AG04449 (cell line): ENCODE measurements at regions of chr2 and their contacts with region 1.

Region 1: DNA sequence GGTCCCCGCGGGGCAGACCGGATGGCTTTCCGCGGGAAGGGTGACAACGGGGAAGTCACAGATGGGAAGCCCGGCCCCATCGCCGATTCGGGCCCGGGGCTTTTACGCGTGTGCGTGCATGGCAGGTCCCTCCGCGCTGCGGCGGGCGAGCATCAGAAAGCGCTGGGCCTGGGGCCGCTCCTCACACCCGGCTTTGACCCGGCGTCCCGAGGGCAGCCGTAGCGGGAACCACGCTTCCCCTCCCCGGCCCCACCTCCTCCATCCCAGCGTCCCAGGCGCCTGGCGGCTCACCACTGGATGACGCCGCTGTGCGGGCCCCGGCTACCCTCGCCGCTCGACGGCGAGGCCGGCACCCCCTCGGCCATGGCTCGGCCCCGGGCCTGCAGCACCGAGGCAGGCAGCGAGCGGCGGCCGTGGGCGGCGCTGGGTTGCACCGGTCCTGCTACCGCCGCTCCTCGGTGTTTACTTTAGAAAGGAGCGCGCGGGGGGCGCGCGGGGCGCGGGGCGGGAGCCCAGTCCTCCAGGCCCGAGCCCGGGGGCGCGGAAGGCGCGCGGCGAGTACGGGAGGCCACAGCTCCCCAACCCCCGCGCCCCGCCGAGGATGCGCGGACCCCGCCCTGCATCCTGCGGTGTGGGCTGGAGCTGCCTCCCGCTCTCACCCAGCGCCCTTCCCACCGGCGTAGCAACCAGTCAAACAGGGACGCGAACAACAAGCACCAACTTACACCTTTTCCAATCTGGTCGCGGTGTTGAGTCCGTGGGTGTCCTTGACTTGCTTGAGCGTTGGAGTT is 806 bp downstream of the RFX8 start:
- DNase-seq: no peak
- H3K4me3 ChIP-seq: peak overlapping the region; percentile 63
- CTCF ChIP-seq: no peak

Region 2: GRCh38 chr2:101410716-101411211 is 63.3 kb before region 1 on chr2:
- CTCF ChIA-PET with region 1: no interaction called
- POLR2A ChIA-PET with region 1: no interaction called
- DNase-seq: no peak
- H3K4me3 ChIP-seq: no peak overlapping the region
- CTCF ChIP-seq: no peak

Region 3: DNA sequence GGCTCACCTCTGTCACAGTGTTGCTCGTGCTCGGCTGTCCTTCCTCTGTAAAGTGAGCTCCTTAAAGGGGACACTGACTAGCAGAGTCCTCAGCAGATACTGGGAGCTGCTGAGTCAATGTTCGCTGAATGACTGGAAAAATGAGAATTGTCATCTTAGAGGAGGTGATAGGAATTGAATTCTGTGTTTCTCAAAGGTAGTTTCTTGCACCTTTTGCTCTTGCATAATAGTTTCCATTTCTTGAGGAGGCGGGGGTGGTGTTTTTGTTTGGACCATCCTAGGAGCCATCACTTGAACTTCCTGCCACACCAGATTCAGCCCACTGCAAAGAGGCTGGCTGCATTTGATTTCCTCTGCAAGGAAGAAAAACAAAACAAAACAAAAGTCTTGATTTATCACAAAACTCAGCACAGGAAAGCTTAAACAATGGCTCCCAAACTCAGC is 12.2 kb after region 1 on chr2:
- CTCF ChIA-PET with region 1: no interaction called
- POLR2A ChIA-PET with region 1: no interaction called
- DNase-seq: no peak
- H3K4me3 ChIP-seq: no peak overlapping the region
- CTCF ChIP-seq: no peak

Region 4: GRCh38 chr2:101518578-101519492 is 44.7 kb after region 1 on chr2:
- CTCF ChIA-PET with region 1: no interaction called
- POLR2A ChIA-PET with region 1: interaction called, 15 read pairs
- DNase-seq: no peak
- H3K4me3 ChIP-seq: no peak overlapping the region
- CTCF ChIP-seq: peak; percentile 41